IMR-90 (cell line): ENCODE measurements at regions of chr9 and their contacts with region 1.

Region 1: DNA sequence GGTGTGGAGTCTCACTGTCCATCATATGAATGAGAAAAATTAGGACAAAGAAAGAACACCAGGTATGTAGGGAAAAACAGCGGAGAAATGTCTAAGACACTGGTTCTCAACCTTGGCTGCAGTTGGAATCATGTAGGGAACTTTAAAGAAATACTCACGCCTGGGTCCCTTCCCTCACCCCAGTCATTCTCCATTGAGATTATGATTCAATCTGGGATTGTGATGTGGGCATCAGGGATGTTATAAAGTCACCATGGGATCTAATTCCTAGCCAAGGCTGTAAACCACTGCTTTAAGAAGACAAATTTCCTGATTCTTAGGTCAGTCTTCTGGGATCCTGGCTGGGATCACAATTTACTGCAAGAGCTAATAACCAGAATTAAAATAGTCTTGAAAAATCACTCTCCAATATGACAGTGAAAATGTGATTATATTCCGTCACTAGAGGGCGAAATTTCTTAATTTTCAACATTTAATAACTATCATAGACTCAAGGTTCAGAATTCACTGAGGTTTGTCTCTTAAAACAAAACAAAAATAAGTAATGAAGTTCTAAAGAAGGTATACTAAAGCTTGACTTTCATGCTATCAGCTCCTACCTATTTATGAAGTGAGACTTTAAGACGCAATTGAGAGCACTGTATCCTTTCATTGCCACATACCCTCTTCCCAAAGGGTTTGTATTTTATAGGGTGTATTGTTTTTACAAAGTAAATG is 60.5 kb downstream of the GLDC start:
- DNase-seq: peak; percentile 40
- ATAC-seq: peak; percentile 63
- H3K4me3 ChIP-seq: no peak overlapping the region
- H3K27ac ChIP-seq: no peak overlapping the region
- H3K4me1 ChIP-seq: no peaks in the 10 kb centered on the region
- H3K27me3 ChIP-seq: peaks cover 7% of the 10 kb centered on the region
- CTCF ChIP-seq: peak; percentile 51
- POLR2A ChIP-seq: no peak
- RAD21 ChIP-seq: peak; percentile 44

Region 2: DNA sequence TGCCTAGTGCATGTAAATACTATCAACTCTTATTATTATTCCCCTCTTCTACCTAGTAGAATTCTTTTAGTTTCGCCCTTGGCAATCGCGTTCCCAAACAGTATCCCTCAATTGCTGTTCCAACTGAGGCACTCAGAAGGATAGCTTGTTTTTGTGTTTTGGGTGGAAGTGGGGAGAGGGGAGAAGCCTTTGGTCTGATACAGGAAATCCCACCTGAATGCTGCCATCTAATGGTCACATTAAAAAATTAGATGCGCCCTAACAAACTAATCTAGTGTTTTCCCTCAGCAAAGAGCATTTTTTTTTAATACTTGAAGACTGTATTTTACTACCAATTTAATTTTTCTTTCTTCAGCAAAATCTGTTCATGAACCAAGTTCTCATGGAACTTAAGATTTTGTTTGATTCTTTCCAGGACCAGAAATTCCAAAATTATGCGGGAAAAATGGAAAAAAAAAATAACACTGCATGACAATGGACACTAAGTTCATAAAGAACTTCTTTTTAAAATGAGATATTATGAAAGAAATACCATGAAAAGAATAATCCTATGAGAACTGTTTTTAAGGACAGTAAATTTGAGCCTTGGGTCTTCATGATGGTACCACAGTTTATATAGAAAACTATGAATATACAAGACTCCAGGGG is 82.7 kb after region 1 on chr9:
- CTCF ChIA-PET with region 1: interaction called, 10 read pairs
- POLR2A ChIA-PET with region 1: no interaction called
- dilution Hi-C with region 1: no loop called
- in situ Hi-C with region 1: loop called (anchors 5 kb)
- intact Hi-C with region 1: loop called (anchors 1 kb)
- DNase-seq: peak; percentile 44
- ATAC-seq: peak; percentile 65
- H3K4me3 ChIP-seq: no peak overlapping the region
- H3K27ac ChIP-seq: no peak overlapping the region
- H3K4me1 ChIP-seq: no peaks in the 10 kb centered on the region
- H3K27me3 ChIP-seq: peaks cover 2% of the 10 kb centered on the region
- CTCF ChIP-seq: peak; percentile 64
- POLR2A ChIP-seq: no peak
- RAD21 ChIP-seq: peak; percentile 51

Region 3: DNA sequence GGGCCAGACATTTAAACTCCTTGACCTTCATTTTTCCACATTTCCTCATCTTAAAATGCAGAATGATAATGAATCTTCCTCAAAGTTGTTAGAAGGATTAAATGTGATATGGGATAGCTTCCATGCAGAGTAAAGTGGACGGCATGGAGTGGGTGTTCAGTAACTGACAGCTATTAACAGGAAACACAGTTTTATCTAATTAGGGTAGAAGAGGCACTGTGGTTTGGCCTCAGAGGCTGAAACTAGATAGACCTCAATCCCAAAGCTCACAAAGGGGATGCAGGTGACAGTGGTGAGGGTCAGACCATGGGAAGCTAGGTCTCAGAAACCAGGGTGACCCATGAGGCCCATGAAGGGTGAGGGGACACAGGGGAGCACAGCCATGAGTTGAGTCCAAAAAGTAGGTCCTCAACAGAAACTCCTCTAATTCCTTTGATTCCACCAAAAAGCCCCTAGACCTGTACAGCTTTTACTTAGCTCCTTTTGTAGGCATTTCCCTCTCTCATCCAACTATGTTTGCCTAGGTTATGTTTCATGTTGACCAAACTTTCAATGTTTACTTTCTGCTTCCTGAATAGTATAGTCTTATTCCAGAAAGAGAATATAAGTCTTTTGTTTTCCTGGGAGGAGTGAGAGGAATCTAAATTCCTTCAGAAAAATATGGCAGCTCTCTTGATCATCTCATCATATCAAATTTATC is 88.4 kb after region 1 on chr9:
- CTCF ChIA-PET with region 1: interaction called, 5 read pairs
- POLR2A ChIA-PET with region 1: no interaction called
- dilution Hi-C with region 1: no loop called
- in situ Hi-C with region 1: loop called (anchors 5 kb)
- intact Hi-C with region 1: no loop called
- DNase-seq: no peak
- ATAC-seq: no peak
- H3K4me3 ChIP-seq: no peak overlapping the region
- H3K27ac ChIP-seq: no peak overlapping the region
- H3K4me1 ChIP-seq: no peaks in the 10 kb centered on the region
- H3K27me3 ChIP-seq: peaks cover 2% of the 10 kb centered on the region
- CTCF ChIP-seq: no peak
- POLR2A ChIP-seq: no peak
- RAD21 ChIP-seq: no peak

Region 4: GRCh38 chr9:6739218-6739617 is 154.2 kb after region 1 on chr9:
- CTCF ChIA-PET with region 1: no interaction called
- POLR2A ChIA-PET with region 1: no interaction called
- dilution Hi-C with region 1: no loop called
- in situ Hi-C with region 1: loop called (anchors 10 kb)
- intact Hi-C with region 1: loop called (anchors 2 kb)
- DNase-seq: peak; percentile 25
- ATAC-seq: peak; percentile 63; the same call in 1 of the 2 replicates
- H3K4me3 ChIP-seq: no peak overlapping the region
- H3K27ac ChIP-seq: no peak overlapping the region
- H3K4me1 ChIP-seq: no peaks in the 10 kb centered on the region
- H3K27me3 ChIP-seq: peaks cover 2% of the 10 kb centered on the region; the same call in 1 of the 2 replicates
- CTCF ChIP-seq: peak; percentile 44
- POLR2A ChIP-seq: no peak
- RAD21 ChIP-seq: peak; percentile 37; the same call in 1 of the 2 replicates